Esophagus muscularis mucosa (tissue), 4 donors: ENCODE measurements at regions of chr9 and their contacts with region 1.

Region 1: GRCh38 chr9:35790385-35791296 is 750 bp upstream of the NPR2 start:
- DNase-seq: no peak
- H3K4me3 ChIP-seq: peak overlapping the region; percentile 68 to 82 (median 68)
- H3K27ac ChIP-seq: peak overlapping the region; percentile 85 to 91 (median 87)
- H3K4me1 ChIP-seq: peaks cover 28 to 54% (median 53%) of the 10 kb centered on the region in 4 donors
- H3K27me3 ChIP-seq: no peaks in the 10 kb centered on the region
- CTCF ChIP-seq: peak; percentile 83 to 91 (median 85)
- EP300 ChIP-seq: no peak
- POLR2A ChIP-seq: no peak

Region 2: GRCh38 chr9:35826071-35826701 is 35.5 kb after region 1 on chr9:
- intact Hi-C with region 1: loop called (anchors 2 kb)
- DNase-seq: no peak
- H3K4me3 ChIP-seq: no peak overlapping the region
- H3K27ac ChIP-seq: no peak overlapping the region
- H3K4me1 ChIP-seq: peaks cover 20 to 42% (median 32%) of the 10 kb centered on the region in 4 donors
- H3K27me3 ChIP-seq: no peaks in the 10 kb centered on the region
- CTCF ChIP-seq: peak; percentile 77 to 86 (median 86)
- EP300 ChIP-seq: no peak
- POLR2A ChIP-seq: no peak